MCF 10A (cell line): ENCODE measurements at regions of chr20 and their contacts with region 1.

Region 1: DNA sequence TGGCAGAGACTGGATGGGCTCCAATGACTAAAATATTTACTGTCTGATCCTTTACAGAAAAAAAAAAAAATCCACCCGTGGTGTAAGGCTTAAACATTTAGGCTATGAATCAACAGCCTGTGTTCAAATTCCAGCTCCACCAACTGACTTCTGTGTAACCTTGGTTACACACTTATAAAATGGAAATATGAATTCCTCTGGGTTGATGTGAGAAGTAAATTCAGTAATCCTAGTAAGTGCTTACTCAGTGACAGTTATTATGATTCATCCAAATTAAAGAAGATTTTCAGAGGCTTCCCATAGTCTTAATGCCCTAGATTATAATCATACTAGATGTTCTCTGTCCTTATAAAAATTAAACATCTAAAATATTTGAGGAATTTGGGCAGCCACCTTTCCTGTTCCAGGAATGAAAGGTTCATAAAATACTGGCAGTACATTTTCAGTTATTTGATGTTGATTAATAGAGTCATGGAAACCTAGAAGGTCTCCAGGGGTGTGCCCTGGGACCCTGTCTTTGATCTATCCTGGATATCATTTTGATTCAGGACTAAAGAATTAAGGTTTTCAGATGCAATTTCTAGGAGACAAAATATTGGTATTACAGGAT is 180.3 kb upstream of the ZNF217 start:
- DNase-seq: peak; percentile 79
- H3K4me3 Mint-ChIP-seq: no peak overlapping the region
- H3K27ac Mint-ChIP-seq: peak overlapping the region; percentile 92
- H3K4me1 Mint-ChIP-seq: peaks cover 21% of the 10 kb centered on the region
- H3K27me3 Mint-ChIP-seq: no peaks in the 10 kb centered on the region
- CTCF ChIP-seq: no peak

Region 2: DNA sequence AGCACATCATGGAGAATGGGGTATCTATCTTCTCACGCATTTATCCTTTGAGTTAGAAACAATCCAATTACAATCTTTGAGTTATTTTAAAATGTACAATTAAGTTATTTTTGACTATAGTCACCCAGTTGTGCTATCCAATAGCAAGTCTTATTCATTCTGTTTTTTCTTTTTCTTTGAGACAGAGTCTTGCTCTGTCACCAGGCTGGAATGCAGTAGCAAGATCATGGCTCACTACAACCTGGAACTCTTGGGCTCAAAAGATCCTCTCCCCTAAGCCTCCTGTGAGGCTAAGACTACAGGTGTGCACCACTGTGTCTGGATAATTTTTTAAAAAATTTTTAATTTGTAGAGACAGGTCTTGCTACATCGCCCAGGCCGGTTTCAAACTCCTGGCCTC is 21.3 kb after region 1 on chr20:
- CTCF ChIA-PET with region 1: interaction called, 6 read pairs
- POLR2A ChIA-PET with region 1: interaction called, 10 read pairs
- intact Hi-C with region 1: no loop called
- DNase-seq: no peak
- H3K4me3 Mint-ChIP-seq: no peak overlapping the region
- H3K27ac Mint-ChIP-seq: no peak overlapping the region
- H3K4me1 Mint-ChIP-seq: peaks cover 11% of the 10 kb centered on the region
- H3K27me3 Mint-ChIP-seq: no peaks in the 10 kb centered on the region
- CTCF ChIP-seq: no peak